ENCODE measurements at regions of chr12 and their contacts with region 1.

Region 1: GRCh38 chr12:46430340-46430948 is 57.9 kb upstream of the SLC38A2 start:
- DNase-seq: peak; percentile 92
- ATAC-seq: peak; percentile 65
- H3K4me3 ChIP-seq: peak overlapping the region in 1 of 2 experiments; percentile 38; a peak in 2 of 4 replicates
- H3K27ac ChIP-seq: peak overlapping the region; percentile 76
- H3K4me1 ChIP-seq: peaks cover 67 to 71% of the 10 kb centered on the region in 2 experiments
- H3K27me3 ChIP-seq: no peaks in the 10 kb centered on the region
- CTCF ChIP-seq: no peak
- POLR2A ChIP-seq: no peak
- RAD21 ChIP-seq: peak; percentile 41

Region 2: DNA sequence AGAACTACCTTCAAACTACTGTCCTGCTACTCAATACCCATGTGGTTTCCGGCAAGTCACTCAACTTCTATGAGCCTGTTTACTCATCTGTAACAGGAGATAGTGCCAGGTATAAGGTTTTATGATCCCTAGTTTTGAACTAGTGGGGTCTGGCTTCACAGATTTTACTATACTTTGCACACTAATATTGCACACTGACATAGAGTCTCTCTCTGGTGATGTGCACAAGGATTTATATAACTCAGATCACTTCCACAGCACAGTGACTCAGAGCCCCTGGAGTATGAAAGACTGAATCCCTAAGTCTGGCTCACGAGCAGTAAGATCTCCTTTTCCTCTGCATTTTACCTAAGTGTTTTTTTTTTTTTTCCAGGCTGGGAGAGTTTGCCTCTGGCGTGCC is 11.8 kb after region 1 on chr12:
- CTCF ChIA-PET with region 1: no interaction called
- POLR2A ChIA-PET with region 1: interaction called, 24 read pairs
- RAD21 ChIA-PET with region 1: no interaction called
- intact Hi-C with region 1: no loop called
- DNase-seq: no peak
- ATAC-seq: peak; percentile 68
- H3K4me3 ChIP-seq: peak overlapping the region in 1 of 2 experiments; percentile 21; a peak in 1 of 4 replicates
- H3K27ac ChIP-seq: peak overlapping the region; percentile 93
- H3K4me1 ChIP-seq: peaks cover 84 to 98% of the 10 kb centered on the region in 2 experiments
- H3K27me3 ChIP-seq: no peaks in the 10 kb centered on the region
- CTCF ChIP-seq: no peak
- POLR2A ChIP-seq: no peak
- RAD21 ChIP-seq: no peak

Region 3: GRCh38 chr12:46492471-46493351 is 62.3 kb after region 1 on chr12:
- CTCF ChIA-PET with region 1: no interaction called
- POLR2A ChIA-PET with region 1: no interaction called
- RAD21 ChIA-PET with region 1: no interaction called
- intact Hi-C with region 1: loop called (anchors 5 kb)
- DNase-seq: peak; percentile 85
- ATAC-seq: peak; percentile 57
- H3K4me3 ChIP-seq: no peak overlapping the region
- H3K27ac ChIP-seq: peak overlapping the region; percentile 73
- H3K4me1 ChIP-seq: peaks cover 71 to 72% of the 10 kb centered on the region in 2 experiments
- H3K27me3 ChIP-seq: no peaks in the 10 kb centered on the region
- CTCF ChIP-seq: no peak
- POLR2A ChIP-seq: no peak
- RAD21 ChIP-seq: no peak

Region 4: DNA sequence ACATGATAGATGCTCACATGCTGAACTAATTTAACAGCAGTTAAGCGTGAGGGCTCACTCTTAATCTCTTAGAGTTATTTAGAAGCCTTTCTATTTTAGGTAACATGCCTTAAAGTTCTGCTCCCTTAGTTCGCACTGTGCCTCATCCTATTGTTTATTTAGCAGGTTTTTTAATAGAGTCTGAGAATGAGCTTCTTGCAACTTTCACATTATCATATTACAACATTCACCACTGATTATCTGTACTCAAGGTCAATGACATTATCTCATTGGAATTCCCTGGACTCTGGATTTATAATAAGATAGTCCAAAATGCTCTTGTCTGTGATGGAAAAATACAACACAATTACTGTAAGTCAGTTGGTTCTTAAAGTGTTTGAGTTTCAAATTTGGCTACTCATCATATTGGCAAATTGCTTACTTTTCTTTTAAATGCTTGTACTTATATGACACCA is 125.7 kb after region 1 on chr12:
- CTCF ChIA-PET with region 1: no interaction called
- POLR2A ChIA-PET with region 1: interaction called, 8 read pairs
- RAD21 ChIA-PET with region 1: interaction called in 1 of 2 experiments, 8 read pairs
- intact Hi-C with region 1: loop called (anchors 2 kb)
- DNase-seq: peak; percentile 84
- ATAC-seq: peak; percentile 28
- H3K4me3 ChIP-seq: peak overlapping the region in 1 of 2 experiments; percentile 25; a peak in 2 of 4 replicates
- H3K27ac ChIP-seq: peak overlapping the region; percentile 91
- H3K4me1 ChIP-seq: peaks cover 84 to 91% of the 10 kb centered on the region in 2 experiments
- H3K27me3 ChIP-seq: no peaks in the 10 kb centered on the region
- CTCF ChIP-seq: no peak
- POLR2A ChIP-seq: no peak
- RAD21 ChIP-seq: peak; percentile 30; the same call in 1 of the 2 replicates